PC-9 (cell line): ENCODE measurements at regions of chr12 and their contacts with region 1.

Region 1: GRCh38 chr12:6461401-6462233 is 8.9 kb downstream of the VAMP1 start:
- DNase-seq: no peak
- H3K4me3 ChIP-seq: no peak overlapping the region
- H3K27ac ChIP-seq: no peak overlapping the region
- H3K4me1 ChIP-seq: no peaks in the 10 kb centered on the region
- H3K27me3 ChIP-seq: no peaks in the 10 kb centered on the region
- CTCF ChIP-seq: no peak

Region 2: DNA sequence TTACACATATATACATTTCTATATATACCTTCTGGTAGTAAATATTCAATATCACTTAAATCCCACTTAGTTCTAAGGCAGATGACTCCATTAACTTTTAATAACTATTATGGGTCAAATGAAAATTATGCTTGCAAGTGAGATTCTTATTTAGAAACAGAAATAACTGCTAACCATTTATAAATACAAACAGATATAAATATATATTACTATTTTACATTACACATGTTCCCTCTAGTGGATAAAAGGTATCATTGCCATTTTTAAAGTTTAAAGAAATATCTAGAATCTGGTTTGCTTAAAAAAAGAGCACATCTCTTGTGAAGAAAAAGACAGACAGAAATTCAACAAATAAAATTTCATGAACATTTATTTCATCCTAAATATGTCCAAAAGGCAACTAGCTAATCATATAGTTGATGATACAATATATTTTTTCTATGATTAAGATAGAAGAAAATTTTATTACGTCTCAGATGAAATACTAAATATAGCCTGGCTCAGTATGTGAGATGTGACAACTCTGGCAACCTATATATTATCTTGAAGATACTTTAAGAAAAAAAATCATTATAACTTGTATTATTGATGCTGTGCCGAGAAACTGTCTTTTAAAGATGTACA is 1934.6 kb before region 1 on chr12:
- CTCF ChIA-PET with region 1: no interaction called
- POLR2A ChIA-PET with region 1: no interaction called
- intact Hi-C with region 1: no loop called
- DNase-seq: no peak
- H3K4me3 ChIP-seq: no peak overlapping the region
- H3K27ac ChIP-seq: no peak overlapping the region
- H3K4me1 ChIP-seq: no peaks in the 10 kb centered on the region
- H3K27me3 ChIP-seq: no peaks in the 10 kb centered on the region
- CTCF ChIP-seq: peak; percentile 86

Region 3: GRCh38 chr12:6345319-6346091 is 116.1 kb before region 1 on chr12:
- CTCF ChIA-PET with region 1: no interaction called
- POLR2A ChIA-PET with region 1: interaction called, 11 read pairs
- intact Hi-C with region 1: no loop called
- DNase-seq: peak; percentile 76 to 87
- H3K4me3 ChIP-seq: no peak overlapping the region
- H3K27ac ChIP-seq: peak overlapping the region; percentile 48
- H3K4me1 ChIP-seq: peaks cover 43% of the 10 kb centered on the region
- H3K27me3 ChIP-seq: no peaks in the 10 kb centered on the region
- CTCF ChIP-seq: no peak